ENCODE measurements at regions of chr9 and their contacts with region 1.

Region 1: DNA sequence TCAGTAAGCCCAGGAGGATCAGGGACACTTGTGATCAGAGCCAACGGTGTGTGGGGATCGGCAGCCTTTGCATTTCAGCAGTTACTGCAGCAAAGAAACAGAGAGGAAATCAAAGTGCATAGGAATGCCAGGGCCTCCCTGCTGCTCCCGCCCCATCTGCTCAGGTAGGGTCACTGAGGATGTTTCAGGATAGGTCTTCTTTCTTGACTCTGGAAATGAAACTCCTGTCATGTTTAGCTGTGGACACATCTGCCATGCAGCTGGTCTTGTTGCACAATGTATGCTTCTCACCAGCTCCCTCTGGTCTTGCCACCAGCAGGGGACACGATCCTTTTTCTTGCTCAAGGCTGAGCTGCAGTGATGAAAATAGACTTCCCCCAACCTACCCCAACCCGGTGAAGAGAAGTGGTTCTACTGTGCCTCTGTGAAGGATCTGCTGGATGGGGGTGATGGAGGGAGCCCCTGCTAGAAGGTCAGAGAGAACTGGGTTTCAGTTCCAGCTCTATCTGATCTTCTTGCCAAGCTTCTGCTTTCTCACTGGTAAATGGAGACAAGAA is 185.2 kb upstream of the KLF4 start:
- DNase-seq: peak; percentile 88 to 93 (median 89)
- H3K4me3 ChIP-seq: peak overlapping the region in 1 of 3 experiments; percentile 34
- H3K4me3 Mint-ChIP-seq: peak overlapping the region; percentile 58 to 68
- H3K27ac ChIP-seq: peak overlapping the region; percentile 82 to 93
- H3K27ac Mint-ChIP-seq: peak overlapping the region; percentile 94 to 99 (median 98)
- H3K4me1 ChIP-seq: peaks cover 37 to 42% of the 10 kb centered on the region in 2 donors
- H3K4me1 Mint-ChIP-seq: peaks cover 45% of the 10 kb centered on the region
- H3K27me3 ChIP-seq: no peaks in the 10 kb centered on the region
- H3K27me3 Mint-ChIP-seq: peaks cover 0 to 5% (median 0%) of the 10 kb centered on the region in 3 donors
- CTCF ChIP-seq: peak; percentile 37

Region 2: GRCh38 chr9:107612136-107612535 is 62.7 kb before region 1 on chr9:
- intact Hi-C with region 1: loop called in 1 of 2 experiments (anchors 10 kb)
- DNase-seq: peak; percentile 86 to 92 (median 91)
- H3K4me3 ChIP-seq: no peak overlapping the region
- H3K4me3 Mint-ChIP-seq: peak overlapping the region; percentile 4 to 35
- H3K27ac ChIP-seq: peak overlapping the region; percentile 70 to 94
- H3K27ac Mint-ChIP-seq: peak overlapping the region; percentile 89 to 97 (median 94)
- H3K4me1 ChIP-seq: peaks cover 64 to 67% of the 10 kb centered on the region in 2 donors
- H3K4me1 Mint-ChIP-seq: peaks cover 77% of the 10 kb centered on the region
- H3K27me3 ChIP-seq: no peaks in the 10 kb centered on the region
- H3K27me3 Mint-ChIP-seq: peaks cover 0 to 3% (median 2%) of the 10 kb centered on the region in 3 donors
- CTCF ChIP-seq: no peak

Region 3: GRCh38 chr9:107637421-107638420 is 37.1 kb before region 1 on chr9:
- intact Hi-C with region 1: loop called in 1 of 2 experiments (anchors 2 kb)
- DNase-seq: peak; percentile 92 to 97 (median 93)
- H3K4me3 ChIP-seq: peak overlapping the region; percentile 47 to 74 (median 70)
- H3K4me3 Mint-ChIP-seq: peak overlapping the region; percentile 81 to 92
- H3K27ac ChIP-seq: peak overlapping the region; percentile 98 to 99
- H3K27ac Mint-ChIP-seq: peak overlapping the region; percentile 97 to 98 (median 98)
- H3K4me1 ChIP-seq: peaks cover 35 to 41% of the 10 kb centered on the region in 2 donors
- H3K4me1 Mint-ChIP-seq: peaks cover 45% of the 10 kb centered on the region
- H3K27me3 ChIP-seq: no peaks in the 10 kb centered on the region
- H3K27me3 Mint-ChIP-seq: peaks cover 0 to 3% (median 0%) of the 10 kb centered on the region in 3 donors
- CTCF ChIP-seq: no peak

Region 4: GRCh38 chr9:107760454-107761237 is 85.8 kb after region 1 on chr9:
- intact Hi-C with region 1: loop called in 1 of 2 experiments (anchors 5 kb)
- DNase-seq: peak; percentile 89 to 98 (median 94)
- H3K4me3 ChIP-seq: peak overlapping the region in 1 of 3 experiments; percentile 67
- H3K4me3 Mint-ChIP-seq: peak overlapping the region; percentile 67 to 85
- H3K27ac ChIP-seq: peak overlapping the region; percentile 82 to 87
- H3K27ac Mint-ChIP-seq: peak overlapping the region; percentile 91 to 99 (median 98)
- H3K4me1 ChIP-seq: peaks cover 53 to 62% of the 10 kb centered on the region in 2 donors
- H3K4me1 Mint-ChIP-seq: peaks cover 50% of the 10 kb centered on the region
- H3K27me3 ChIP-seq: no peaks in the 10 kb centered on the region
- H3K27me3 Mint-ChIP-seq: peaks cover 0 to 3% (median 0%) of the 10 kb centered on the region in 3 donors
- CTCF ChIP-seq: no peak

Measured in CD14-positive monocyte (primary cell).